ENCODE measurements at regions of chr1 and their contacts with region 1.

Region 1: GRCh38 chr1:90841473-90841872 is 124.4 kb upstream of the BARHL2 start:
- DNase-seq: no peak
- ATAC-seq: no peak
- H3K4me3 ChIP-seq: no peak overlapping the region
- H3K27ac ChIP-seq: no peak overlapping the region
- H3K4me1 ChIP-seq: no peaks in the 10 kb centered on the region
- H3K27me3 ChIP-seq: peaks cover 0 to 17% of the 10 kb centered on the region in 2 experiments; a peak in 3 of 4 replicates
- CTCF ChIP-seq: no peak
- EP300 ChIP-seq: no peak
- POLR2A ChIP-seq: no peak
- RAD21 ChIP-seq: no peak

Region 2: DNA sequence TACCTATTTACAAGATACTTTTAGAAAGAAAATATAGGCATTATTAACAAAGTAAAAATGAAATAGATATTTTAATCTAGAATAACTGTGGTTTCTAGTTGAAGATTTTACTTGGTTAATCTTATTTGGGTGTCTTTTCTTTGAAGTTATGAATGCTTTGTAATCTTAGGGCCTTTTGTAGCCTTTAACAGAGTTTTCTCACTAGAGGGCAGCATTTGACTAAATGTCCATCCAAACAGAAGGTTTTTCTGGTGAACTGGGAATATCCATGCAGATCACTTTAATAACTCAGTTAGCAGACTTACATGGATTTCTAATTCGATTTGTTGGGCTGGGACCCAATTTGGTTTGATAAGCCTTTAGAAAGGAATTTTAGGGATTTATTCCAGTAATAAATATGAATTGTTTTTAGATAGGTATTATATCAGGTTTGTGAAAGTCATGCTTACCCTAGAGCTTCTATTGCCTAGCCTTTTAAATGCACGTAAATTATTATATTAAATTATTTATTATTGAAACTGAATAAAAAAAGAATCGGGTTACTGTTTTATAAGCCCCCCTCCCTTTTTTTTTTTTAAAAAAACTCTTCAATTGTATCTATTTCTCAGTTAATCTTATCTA is 726.8 kb before region 1 on chr1:
- CTCF ChIA-PET with region 1: interaction called, 4 read pairs
- POLR2A ChIA-PET with region 1: no interaction called
- RAD21 ChIA-PET with region 1: no interaction called
- SMC1A ChIA-PET with region 1: no interaction called
- in situ Hi-C with region 1: no loop called
- intact Hi-C with region 1: loop called (anchors 10 kb)
- DNase-seq: peak; percentile 8
- ATAC-seq: peak; percentile 65
- H3K4me3 ChIP-seq: no peak overlapping the region
- H3K27ac ChIP-seq: no peak overlapping the region
- H3K4me1 ChIP-seq: no peaks in the 10 kb centered on the region
- H3K27me3 ChIP-seq: no peaks in the 10 kb centered on the region
- CTCF ChIP-seq: peak; percentile 55 to 73 (median 72); a peak in 5 of 6 replicates
- EP300 ChIP-seq: no peak
- POLR2A ChIP-seq: no peak
- RAD21 ChIP-seq: peak; percentile 93

Region 3: DNA sequence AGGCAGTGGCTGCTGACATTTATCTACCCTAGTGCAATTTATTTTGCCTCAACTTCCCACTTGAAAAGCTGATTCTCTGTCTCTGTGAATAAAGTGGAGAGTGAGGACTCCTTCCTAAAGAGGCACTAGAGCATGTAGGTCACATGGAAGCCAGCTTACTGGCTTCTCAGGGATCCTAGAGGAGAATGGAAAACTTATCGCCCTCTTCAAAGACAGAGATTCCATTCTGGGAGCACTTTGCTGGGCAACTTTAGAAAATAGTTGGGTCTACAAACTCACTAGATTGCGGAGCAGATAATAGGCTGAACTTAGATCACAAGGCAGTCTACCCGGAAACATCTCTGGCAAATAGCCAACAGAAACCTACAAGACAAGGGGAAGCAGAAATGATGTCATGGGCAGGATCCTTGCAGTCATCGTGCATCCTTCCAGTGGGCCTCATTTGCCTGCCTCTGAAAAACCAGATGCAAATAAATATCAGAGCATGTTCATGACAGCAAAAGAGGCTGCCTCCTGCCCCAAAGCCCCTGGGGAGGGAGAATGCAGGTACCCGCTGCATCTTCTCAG is 19.6 kb before region 1 on chr1:
- CTCF ChIA-PET with region 1: no interaction called
- POLR2A ChIA-PET with region 1: no interaction called
- RAD21 ChIA-PET with region 1: no interaction called
- SMC1A ChIA-PET with region 1: no interaction called
- in situ Hi-C with region 1: no loop called
- intact Hi-C with region 1: no loop called
- DNase-seq: no peak
- ATAC-seq: no peak; the same call in 1 of the 3 replicates
- H3K4me3 ChIP-seq: no peak overlapping the region
- H3K27ac ChIP-seq: no peak overlapping the region
- H3K4me1 ChIP-seq: no peaks in the 10 kb centered on the region
- H3K27me3 ChIP-seq: no peaks in the 10 kb centered on the region
- CTCF ChIP-seq: no peak
- EP300 ChIP-seq: no peak
- POLR2A ChIP-seq: no peak
- RAD21 ChIP-seq: no peak